ENCODE measurements at regions of chr4 and their contacts with region 1.

Region 1: GRCh38 chr4:182642831-182643230 is 274.4 kb downstream of the DCTD start:
- DNase-seq: no peak
- H3K4me3 ChIP-seq: no peak overlapping the region
- H3K27ac ChIP-seq: no peak overlapping the region
- H3K4me1 ChIP-seq: no peaks in the 10 kb centered on the region
- H3K27me3 ChIP-seq: no peaks in the 10 kb centered on the region
- CTCF ChIP-seq: no peak
- EP300 ChIP-seq: no peak
- POLR2A ChIP-seq: no peak
- RAD21 ChIP-seq: no peak

Region 2: DNA sequence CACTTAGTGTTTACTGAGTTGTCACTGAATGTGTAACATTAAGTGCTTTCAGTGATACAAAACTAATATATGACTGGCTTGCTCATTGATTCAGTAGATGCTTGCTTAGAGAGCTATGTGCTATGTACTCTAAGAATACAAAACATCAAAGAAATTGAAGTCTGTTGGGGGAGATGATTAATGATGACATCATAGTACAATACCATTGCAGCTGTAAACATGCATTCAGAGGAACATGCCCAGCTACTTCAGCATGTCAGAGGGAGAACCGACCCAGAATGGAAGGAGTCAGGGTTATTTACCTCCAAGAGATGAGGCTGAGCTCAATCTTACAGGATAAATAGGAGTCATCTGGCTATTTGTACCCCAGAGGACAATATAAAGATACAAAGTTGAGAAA is 108.9 kb before region 1 on chr4:
- CTCF ChIA-PET with region 1: no interaction called
- POLR2A ChIA-PET with region 1: no interaction called
- DNase-seq: no peak
- H3K4me3 ChIP-seq: no peak overlapping the region
- H3K27ac ChIP-seq: no peak overlapping the region
- H3K4me1 ChIP-seq: peaks cover 6 to 17% (median 14%) of the 10 kb centered on the region in 4 experiments; a peak in 6 of 7 replicates
- H3K27me3 ChIP-seq: no peaks in the 10 kb centered on the region
- CTCF ChIP-seq: no peak
- EP300 ChIP-seq: no peak
- POLR2A ChIP-seq: no peak
- RAD21 ChIP-seq: no peak

Region 3: DNA sequence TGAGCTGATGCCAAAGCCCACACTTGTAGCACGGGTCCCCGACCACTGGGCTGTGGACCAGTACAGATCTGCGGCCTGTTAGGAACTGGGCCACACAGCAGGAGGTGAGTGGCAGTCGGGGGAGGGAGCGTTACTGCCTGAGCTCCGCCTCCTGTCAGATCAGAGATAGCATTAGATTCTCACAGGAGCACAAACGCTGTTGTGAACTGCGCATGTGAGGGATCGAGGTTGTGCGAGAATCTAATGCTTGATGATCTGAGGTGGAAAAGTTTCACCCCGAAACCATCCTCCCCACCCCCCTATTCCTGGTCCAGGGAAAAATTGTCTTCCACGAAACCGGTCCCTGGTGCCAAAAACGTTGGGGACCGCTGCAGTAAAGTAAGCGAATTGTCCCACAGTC is 17.6 kb before region 1 on chr4:
- CTCF ChIA-PET with region 1: interaction called, 11 read pairs
- POLR2A ChIA-PET with region 1: no interaction called
- DNase-seq: no peak
- H3K4me3 ChIP-seq: no peak overlapping the region
- H3K27ac ChIP-seq: no peak overlapping the region
- H3K4me1 ChIP-seq: peaks cover 0 to 4% (median 0%) of the 10 kb centered on the region in 4 experiments; a peak in 2 of 7 replicates
- H3K27me3 ChIP-seq: no peaks in the 10 kb centered on the region
- CTCF ChIP-seq: no peak
- EP300 ChIP-seq: no peak
- POLR2A ChIP-seq: no peak
- RAD21 ChIP-seq: no peak

Region 4: GRCh38 chr4:182671231-182671630 is 28.4 kb after region 1 on chr4:
- CTCF ChIA-PET with region 1: no interaction called
- POLR2A ChIA-PET with region 1: no interaction called
- DNase-seq: no peak
- H3K4me3 ChIP-seq: no peak overlapping the region
- H3K27ac ChIP-seq: no peak overlapping the region
- H3K4me1 ChIP-seq: no peaks in the 10 kb centered on the region
- H3K27me3 ChIP-seq: no peaks in the 10 kb centered on the region
- CTCF ChIP-seq: no peak
- EP300 ChIP-seq: no peak
- POLR2A ChIP-seq: no peak
- RAD21 ChIP-seq: no peak

Region 5: DNA sequence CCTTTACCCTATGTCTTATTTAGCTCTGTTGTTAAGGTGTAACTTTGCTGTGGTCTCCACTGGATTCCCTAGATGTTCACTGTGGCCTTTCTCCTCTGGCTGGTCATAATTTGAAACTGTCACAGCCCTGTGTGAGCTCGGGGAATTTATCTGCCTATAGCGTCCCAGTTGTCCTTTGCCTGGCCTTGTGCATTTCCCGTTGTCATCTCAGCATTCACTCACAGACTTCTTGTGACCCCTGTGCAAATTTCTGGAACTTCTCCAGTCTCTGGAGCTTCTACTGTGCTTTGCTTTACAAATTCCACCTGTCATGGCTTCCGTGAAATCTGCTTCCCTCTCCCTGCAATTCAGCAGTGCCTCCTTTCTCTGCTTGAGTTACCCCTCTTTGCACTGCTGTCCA is 562.9 kb after region 1 on chr4:
- CTCF ChIA-PET with region 1: no interaction called
- POLR2A ChIA-PET with region 1: no interaction called
- DNase-seq: no peak
- H3K4me3 ChIP-seq: no peak overlapping the region
- H3K27ac ChIP-seq: no peak overlapping the region
- H3K4me1 ChIP-seq: peaks cover 0 to 4% (median 0%) of the 10 kb centered on the region in 4 experiments; a peak in 1 of 7 replicates
- H3K27me3 ChIP-seq: no peaks in the 10 kb centered on the region
- CTCF ChIP-seq: no peak
- EP300 ChIP-seq: no peak
- POLR2A ChIP-seq: no peak
- RAD21 ChIP-seq: no peak